MCF 10A (cell line): ENCODE measurements at regions of chr19 and their contacts with region 1.

Region 1: DNA sequence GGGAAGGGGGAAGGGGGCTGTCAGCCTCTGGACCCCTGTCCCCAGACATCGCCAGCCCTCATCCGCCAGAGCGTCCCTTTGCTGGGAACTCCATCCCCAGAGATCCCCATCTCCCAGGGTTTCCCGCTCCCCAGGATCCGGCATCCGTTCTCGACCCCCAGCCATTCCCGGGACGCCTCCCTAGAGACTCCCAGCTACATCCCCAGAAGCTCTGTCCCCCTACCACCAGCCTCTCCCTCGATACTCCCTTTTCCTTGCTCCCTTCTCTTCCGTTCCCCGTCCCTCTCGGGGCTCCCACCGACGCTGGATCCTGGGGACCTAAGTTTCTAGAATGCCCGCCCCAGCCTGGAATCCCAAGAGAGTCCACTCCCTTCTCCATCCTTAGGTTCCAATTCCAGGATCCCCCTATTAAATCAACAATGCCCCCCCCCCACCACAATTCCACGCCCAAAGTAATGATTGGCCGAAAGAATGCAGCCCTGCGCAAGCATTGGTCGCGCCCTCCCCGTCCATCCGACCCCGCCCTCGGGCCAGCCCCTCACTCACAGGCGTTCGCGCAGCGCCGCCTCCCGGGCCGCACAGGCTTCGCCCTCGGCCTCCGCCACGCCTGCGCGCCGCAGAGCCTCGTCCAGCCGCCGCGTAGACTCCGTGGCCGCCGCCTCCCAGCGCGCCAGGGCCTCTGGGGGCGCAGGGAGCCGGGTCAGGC is 3.2 kb downstream of the CCDC194 start:
- DNase-seq: peak; percentile 94
- H3K4me3 Mint-ChIP-seq: peak overlapping the region; percentile 77
- H3K27ac Mint-ChIP-seq: no peak overlapping the region
- H3K4me1 Mint-ChIP-seq: peaks cover 10% of the 10 kb centered on the region
- H3K27me3 Mint-ChIP-seq: no peaks in the 10 kb centered on the region
- CTCF ChIP-seq: peak; percentile 67

Region 2: DNA sequence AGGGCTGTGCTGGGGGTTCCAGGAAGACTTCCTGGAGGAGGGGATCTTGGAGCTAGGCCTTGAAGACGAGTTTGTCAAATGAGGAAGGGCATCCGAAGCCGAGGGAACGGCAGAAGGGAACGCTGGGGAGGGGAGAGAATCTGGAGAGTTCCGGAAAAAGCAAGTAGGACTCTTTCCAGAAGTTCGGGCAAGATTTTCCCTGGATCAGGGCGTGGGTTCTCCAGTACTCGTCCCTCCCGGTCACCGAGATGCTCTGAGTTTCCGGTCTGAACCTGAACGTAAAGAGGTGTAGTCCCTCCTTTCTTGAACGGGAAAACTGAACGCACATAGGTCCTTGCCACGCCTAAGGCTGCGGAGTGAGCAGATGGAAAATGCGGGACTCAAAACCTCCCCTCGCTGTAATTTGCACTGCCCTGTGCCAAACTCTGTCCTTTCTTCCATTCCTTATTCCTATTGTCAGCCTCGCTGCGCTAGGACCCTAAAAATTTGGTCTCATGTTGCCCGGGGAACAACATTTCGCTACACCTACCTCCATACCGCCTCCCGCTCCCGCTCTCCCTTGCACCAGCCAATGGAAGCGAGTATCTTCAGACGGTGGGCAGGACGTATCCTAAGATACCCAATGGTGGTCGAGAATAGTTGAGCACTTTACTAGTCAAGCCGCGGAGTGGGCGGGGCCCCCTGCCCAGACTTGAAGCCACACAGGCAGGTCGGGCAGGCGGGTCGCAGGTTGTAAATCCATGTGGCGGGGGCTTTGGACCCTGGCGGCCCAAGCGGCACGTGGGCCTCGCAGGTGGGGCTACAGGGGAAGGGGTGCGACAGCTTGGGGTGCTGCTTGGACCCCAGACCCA is 53.7 kb before region 1 on chr19 and contains the start of gene GTPBP3:
- CTCF ChIA-PET with region 1: interaction called, 15 read pairs
- POLR2A ChIA-PET with region 1: interaction called, 4 read pairs
- intact Hi-C with region 1: no loop called
- DNase-seq: peak; percentile 99
- H3K4me3 Mint-ChIP-seq: peak within 1 kb of the TSS; percentile 98
- H3K27ac Mint-ChIP-seq: peak within 1 kb of the TSS; percentile 93
- H3K4me1 Mint-ChIP-seq: peaks cover 15% of the 10 kb centered on the region
- H3K27me3 Mint-ChIP-seq: no peaks in the 10 kb centered on the region
- CTCF ChIP-seq: no peak
- total RNA-seq, gene GTPBP3: 24.8 and 27.9 TPM in 2 replicates

Region 3: DNA sequence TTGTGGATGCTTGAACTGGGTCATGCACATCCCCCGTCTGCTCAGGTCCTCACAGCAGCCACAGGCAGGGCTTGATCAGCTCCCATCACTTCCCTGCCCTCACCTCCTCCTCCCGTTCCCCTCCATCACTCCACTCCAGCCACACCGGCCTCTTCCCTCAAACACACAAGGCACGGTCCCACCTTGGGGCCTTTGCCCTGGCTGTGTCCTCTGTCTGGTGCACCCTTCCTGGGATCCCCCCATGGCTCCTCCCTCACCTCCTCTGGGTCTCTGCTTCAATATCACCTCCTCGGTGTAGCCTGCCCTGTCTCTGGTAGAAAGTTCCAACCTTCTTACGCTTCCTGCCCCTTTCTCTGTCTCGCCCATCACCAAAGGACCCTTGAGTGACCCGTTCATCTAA is 37.4 kb before region 1 on chr19:
- CTCF ChIA-PET with region 1: interaction called, 29 read pairs
- POLR2A ChIA-PET with region 1: no interaction called
- intact Hi-C with region 1: no loop called
- DNase-seq: no peak
- H3K4me3 Mint-ChIP-seq: no peak overlapping the region
- H3K27ac Mint-ChIP-seq: peak overlapping the region; percentile 44
- H3K4me1 Mint-ChIP-seq: peaks cover 14% of the 10 kb centered on the region
- H3K27me3 Mint-ChIP-seq: no peaks in the 10 kb centered on the region
- CTCF ChIP-seq: no peak

Region 4: GRCh38 chr19:17370026-17370587 is 20.7 kb before region 1 on chr19:
- CTCF ChIA-PET with region 1: interaction called, 15 read pairs
- POLR2A ChIA-PET with region 1: no interaction called
- intact Hi-C with region 1: no loop called
- DNase-seq: peak; percentile 86
- H3K4me3 Mint-ChIP-seq: no peak overlapping the region
- H3K27ac Mint-ChIP-seq: peak overlapping the region; percentile 17
- H3K4me1 Mint-ChIP-seq: peaks cover 7% of the 10 kb centered on the region
- H3K27me3 Mint-ChIP-seq: no peaks in the 10 kb centered on the region
- CTCF ChIP-seq: no peak

Region 5: DNA sequence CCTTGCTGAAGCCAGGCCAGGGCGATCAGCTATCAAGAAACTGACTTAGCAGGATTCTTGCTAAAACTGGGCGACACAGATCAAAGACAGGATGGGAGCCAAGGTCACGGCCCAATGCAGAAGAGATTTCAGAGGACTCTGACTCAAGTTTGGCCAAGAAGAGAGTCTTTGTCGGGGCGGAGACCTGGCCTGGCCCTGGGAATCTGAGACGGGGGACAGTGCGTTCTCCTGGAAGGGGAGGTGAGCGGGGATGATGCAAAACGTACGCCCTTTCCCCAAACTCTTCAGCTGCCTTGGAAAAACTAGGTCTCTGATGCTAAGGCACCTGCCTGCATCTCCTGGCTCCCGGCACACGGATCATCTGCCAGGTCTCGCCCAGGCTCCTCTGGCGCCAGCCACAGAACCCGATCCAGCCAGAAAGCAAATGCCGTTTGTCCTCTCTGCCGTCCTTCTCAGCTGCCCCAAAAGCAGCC is 38.9 kb after region 1 on chr19:
- CTCF ChIA-PET with region 1: no interaction called
- POLR2A ChIA-PET with region 1: no interaction called
- intact Hi-C with region 1: no loop called
- DNase-seq: no peak
- H3K4me3 Mint-ChIP-seq: no peak overlapping the region
- H3K27ac Mint-ChIP-seq: no peak overlapping the region
- H3K4me1 Mint-ChIP-seq: peaks cover 10% of the 10 kb centered on the region
- H3K27me3 Mint-ChIP-seq: no peaks in the 10 kb centered on the region
- CTCF ChIP-seq: no peak